ENCODE measurements at regions of chr1 and their contacts with region 1.

Region 1: DNA sequence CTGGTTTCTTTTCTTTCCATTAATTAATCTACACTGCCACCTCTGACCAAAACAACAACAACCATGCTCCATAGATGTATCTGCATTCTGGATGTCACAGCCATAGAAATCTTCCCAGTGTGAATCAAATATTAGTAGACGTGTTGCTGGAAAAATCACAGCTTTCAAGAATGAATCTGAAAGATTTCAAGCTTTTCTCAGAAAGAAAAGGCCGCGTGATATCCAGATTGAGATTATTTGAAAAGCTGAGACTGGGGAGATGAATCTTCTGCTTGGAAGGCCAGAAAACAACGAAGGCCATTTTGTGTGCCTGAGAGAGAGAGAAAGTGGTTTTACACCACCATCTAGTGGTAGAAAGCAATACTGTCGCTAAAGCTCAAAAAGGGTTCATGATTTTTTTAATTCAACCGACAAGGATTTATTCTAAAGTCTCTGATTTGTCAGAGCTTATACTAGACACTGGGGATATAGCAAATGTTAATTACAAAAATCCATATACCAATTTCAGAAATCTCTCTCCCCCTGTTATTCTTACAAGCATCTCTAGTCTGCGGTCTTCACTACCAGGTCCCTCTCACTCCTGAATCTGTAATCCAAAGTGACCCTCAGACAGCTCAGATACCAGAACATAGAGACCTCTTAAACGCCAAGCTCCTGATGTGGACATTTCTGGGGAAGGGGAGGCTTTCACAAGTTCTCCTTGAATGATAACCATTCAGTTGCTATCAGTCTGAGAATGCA is 87.5 kb upstream of the SGIP1 start:
- DNase-seq: peak; percentile 31
- ATAC-seq: peak; percentile 66
- H3K4me3 Mint-ChIP-seq: peak overlapping the region; percentile 68
- H3K27ac Mint-ChIP-seq: peak overlapping the region; percentile 96
- H3K4me1 Mint-ChIP-seq: peaks cover 23% of the 10 kb centered on the region
- H3K27me3 Mint-ChIP-seq: peaks cover 9% of the 10 kb centered on the region
- CTCF ChIP-seq: peak; percentile 77

Region 2: DNA sequence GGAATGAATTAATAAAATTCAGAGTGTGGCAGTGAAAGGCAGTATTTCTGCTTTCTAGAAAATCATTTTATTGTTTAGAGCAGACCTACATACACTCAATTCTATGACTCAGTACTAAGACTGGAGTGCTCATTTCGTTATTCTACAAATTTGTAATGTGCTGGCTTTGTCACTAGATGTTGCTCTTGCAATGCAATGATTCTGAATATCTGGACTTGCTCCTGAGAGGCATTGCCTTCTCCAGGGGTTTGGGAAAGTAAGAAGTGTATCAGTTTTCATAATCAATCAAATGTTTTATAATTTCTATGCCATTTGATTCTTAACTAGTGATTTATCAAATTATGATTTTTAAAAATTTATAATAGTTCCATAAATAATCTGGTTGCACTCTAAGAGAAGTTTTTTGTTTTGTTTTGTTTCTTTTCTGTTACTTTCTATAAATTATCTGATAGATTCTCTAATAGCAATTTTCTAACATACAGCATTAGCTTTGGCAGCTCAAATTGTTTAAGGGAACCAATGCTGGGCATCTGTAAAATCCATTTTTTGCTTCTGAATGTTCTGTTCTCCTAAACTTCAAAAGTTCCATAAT is 193.0 kb before region 1 on chr1:
- CTCF ChIA-PET with region 1: interaction called, 512 read pairs
- POLR2A ChIA-PET with region 1: interaction called, 15 read pairs
- intact Hi-C with region 1: loop called (anchors 1 kb)
- DNase-seq: no peak
- ATAC-seq: peak; percentile 89
- H3K4me3 Mint-ChIP-seq: no peak overlapping the region
- H3K27ac Mint-ChIP-seq: no peak overlapping the region
- H3K4me1 Mint-ChIP-seq: peaks cover 46% of the 10 kb centered on the region
- H3K27me3 Mint-ChIP-seq: peaks cover 1% of the 10 kb centered on the region
- CTCF ChIP-seq: peak; percentile 83

Region 3: GRCh38 chr1:66282343-66282852 is 164.0 kb before region 1 on chr1:
- CTCF ChIA-PET with region 1: interaction called, 19 read pairs
- POLR2A ChIA-PET with region 1: no interaction called
- intact Hi-C with region 1: no loop called
- DNase-seq: peak; percentile 89
- ATAC-seq: peak; percentile 82
- H3K4me3 Mint-ChIP-seq: peak overlapping the region; percentile 14
- H3K27ac Mint-ChIP-seq: peak overlapping the region; percentile 93
- H3K4me1 Mint-ChIP-seq: peaks cover 90% of the 10 kb centered on the region
- H3K27me3 Mint-ChIP-seq: no peaks in the 10 kb centered on the region
- CTCF ChIP-seq: no peak

Region 4: GRCh38 chr1:66350001-66350547 is 96.4 kb before region 1 on chr1:
- CTCF ChIA-PET with region 1: interaction called, 51 read pairs
- POLR2A ChIA-PET with region 1: interaction called, 4 read pairs
- intact Hi-C with region 1: no loop called
- DNase-seq: peak; percentile 83
- ATAC-seq: peak; percentile 74
- H3K4me3 Mint-ChIP-seq: peak overlapping the region; percentile 70
- H3K27ac Mint-ChIP-seq: peak overlapping the region; percentile 81
- H3K4me1 Mint-ChIP-seq: peaks cover 96% of the 10 kb centered on the region
- H3K27me3 Mint-ChIP-seq: no peaks in the 10 kb centered on the region
- CTCF ChIP-seq: no peak

Region 5: DNA sequence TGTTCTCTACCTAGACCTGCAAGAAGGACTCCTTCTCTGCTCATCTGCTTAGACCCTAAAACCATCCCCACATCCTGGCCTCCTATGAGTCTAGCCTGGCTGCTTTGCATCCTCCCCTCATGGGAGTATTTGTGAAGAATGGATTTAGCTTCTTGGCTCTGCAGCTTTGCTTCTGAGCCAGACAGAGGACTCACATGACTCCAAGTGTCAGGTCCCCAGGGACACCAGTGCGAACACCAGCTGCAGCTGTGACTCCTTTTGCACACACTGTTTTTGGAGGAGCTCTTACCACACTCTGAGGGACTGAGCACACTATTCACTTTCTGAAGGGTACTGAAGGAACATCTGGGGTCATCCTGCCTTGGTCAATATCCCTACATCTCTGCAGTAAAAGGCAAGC is 44.2 kb before region 1 on chr1:
- CTCF ChIA-PET with region 1: interaction called, 14 read pairs
- POLR2A ChIA-PET with region 1: interaction called, 3 read pairs
- intact Hi-C with region 1: no loop called
- DNase-seq: no peak
- ATAC-seq: no peak
- H3K4me3 Mint-ChIP-seq: no peak overlapping the region
- H3K27ac Mint-ChIP-seq: no peak overlapping the region
- H3K4me1 Mint-ChIP-seq: peaks cover 34% of the 10 kb centered on the region
- H3K27me3 Mint-ChIP-seq: peaks cover 1% of the 10 kb centered on the region
- CTCF ChIP-seq: no peak

Region 6: DNA sequence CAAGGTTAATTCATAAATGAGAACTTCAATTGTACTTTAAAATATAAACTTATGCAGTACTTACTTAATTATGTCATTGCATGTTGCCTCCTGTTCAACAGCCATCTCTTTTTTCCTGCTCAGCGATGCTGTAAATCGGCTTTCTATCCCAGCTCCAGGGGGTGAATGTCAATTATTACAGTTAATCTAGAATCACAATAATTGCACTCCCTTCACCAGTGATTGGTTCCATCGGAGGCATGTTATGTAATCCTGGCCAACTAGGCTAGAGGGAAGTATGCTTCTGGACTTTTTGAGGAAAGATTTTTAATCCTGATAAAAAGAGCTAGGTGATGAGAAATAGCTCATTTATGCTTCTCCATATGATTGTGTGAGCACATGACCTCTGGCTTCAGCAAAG is 33.7 kb after region 1 on chr1:
- CTCF ChIA-PET with region 1: no interaction called
- POLR2A ChIA-PET with region 1: no interaction called
- intact Hi-C with region 1: no loop called
- DNase-seq: no peak
- ATAC-seq: no peak
- H3K4me3 Mint-ChIP-seq: no peak overlapping the region
- H3K27ac Mint-ChIP-seq: no peak overlapping the region
- H3K4me1 Mint-ChIP-seq: no peaks in the 10 kb centered on the region
- H3K27me3 Mint-ChIP-seq: peaks cover 18% of the 10 kb centered on the region
- CTCF ChIP-seq: no peak

Measured in activated CD8-positive, alpha-beta T cell treated with anti-CD3 and anti-CD28 coated beads for 36 hours (primary cell).